CD8-positive, alpha-beta T cell (primary cell): ENCODE measurements at regions of chr1 and their contacts with region 1.

Region 1: DNA sequence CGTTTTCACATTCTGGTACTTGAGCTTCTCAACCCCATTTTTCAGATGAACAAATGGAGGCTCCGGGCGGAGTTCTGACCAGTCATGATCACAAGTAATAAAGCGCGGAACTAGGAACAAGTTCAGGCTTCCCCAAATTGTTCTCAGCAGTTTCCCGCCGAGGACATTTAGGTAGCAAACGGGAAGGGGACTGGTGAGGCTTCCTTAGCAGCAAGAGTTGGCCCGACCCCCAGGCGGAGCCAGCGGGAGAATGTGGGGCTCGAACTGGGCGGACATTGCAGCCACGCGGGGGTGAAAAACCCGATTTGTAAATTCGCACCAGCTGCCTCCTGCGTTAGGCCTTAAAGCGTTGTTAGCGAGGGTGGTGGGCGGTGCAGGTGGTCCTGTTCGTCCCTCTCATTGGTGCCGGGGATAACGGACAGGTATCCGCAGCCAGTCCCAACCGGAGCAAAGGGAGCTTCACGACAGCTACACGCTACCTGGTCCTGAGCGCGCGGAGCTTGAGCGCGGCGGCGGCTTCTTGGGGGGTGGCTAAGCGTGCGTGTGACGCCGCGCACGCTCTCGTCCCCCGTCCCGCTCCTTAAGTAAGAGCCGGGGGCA is 15.3 kb downstream of the SEMA6C start:
- DNase-seq: peak; percentile 61 to 92 (median 80)
- ATAC-seq: peak; percentile 100
- H3K4me3 ChIP-seq: peak overlapping the region; percentile 40 to 51
- H3K4me3 Mint-ChIP-seq: peak overlapping the region; percentile 82
- H3K27ac ChIP-seq: peak overlapping the region in 1 of 2 experiments; percentile 41
- H3K27ac Mint-ChIP-seq: peak overlapping the region; percentile 90
- H3K4me1 ChIP-seq: peaks cover 10% of the 10 kb centered on the region
- H3K4me1 Mint-ChIP-seq: peaks cover 12% of the 10 kb centered on the region
- H3K27me3 ChIP-seq: no peaks in the 10 kb centered on the region
- H3K27me3 Mint-ChIP-seq: no peaks in the 10 kb centered on the region
- CTCF ChIP-seq: no peak

Region 2: GRCh38 chr1:151146412-151147140 is 15.5 kb after region 1 on chr1 and contains the start of gene SEMA6C:
- CTCF ChIA-PET with region 1: no interaction called
- POLR2A ChIA-PET with region 1: interaction called, 7 read pairs
- intact Hi-C with region 1: loop called in 1 of 2 experiments (anchors 1 kb)
- DNase-seq: peak; percentile 62 to 92 (median 85)
- ATAC-seq: peak; percentile 99
- H3K4me3 ChIP-seq: peak within 1 kb of the TSS; percentile 81 to 84
- H3K4me3 Mint-ChIP-seq: peak within 1 kb of the TSS; percentile 98
- H3K27ac ChIP-seq: peak within 1 kb of the TSS; percentile 19 to 28
- H3K27ac Mint-ChIP-seq: peak within 1 kb of the TSS; percentile 82
- H3K4me1 ChIP-seq: peaks cover 5% of the 10 kb centered on the region
- H3K4me1 Mint-ChIP-seq: peaks cover 17% of the 10 kb centered on the region
- H3K27me3 ChIP-seq: peaks cover 0 to 2% of the 10 kb centered on the region in 2 experiments
- H3K27me3 Mint-ChIP-seq: no peaks in the 10 kb centered on the region
- CTCF ChIP-seq: no peak
- total RNA-seq, gene SEMA6C: 2.0 to 3.0 TPM

Region 3: GRCh38 chr1:151265446-151266236 is 134.6 kb after region 1 on chr1:
- CTCF ChIA-PET with region 1: no interaction called
- POLR2A ChIA-PET with region 1: no interaction called
- intact Hi-C with region 1: no loop called
- DNase-seq: no peak
- ATAC-seq: no peak
- H3K4me3 ChIP-seq: no peak overlapping the region
- H3K4me3 Mint-ChIP-seq: no peak overlapping the region
- H3K27ac ChIP-seq: no peak overlapping the region
- H3K27ac Mint-ChIP-seq: no peak overlapping the region
- H3K4me1 ChIP-seq: no peaks in the 10 kb centered on the region
- H3K4me1 Mint-ChIP-seq: peaks cover 4% of the 10 kb centered on the region
- H3K27me3 ChIP-seq: no peaks in the 10 kb centered on the region
- H3K27me3 Mint-ChIP-seq: no peaks in the 10 kb centered on the region
- CTCF ChIP-seq: no peak